PC-9 (cell line): ENCODE measurements at regions of chr20 and their contacts with region 1.

Region 1: GRCh38 chr20:33666293-33667244 is at the start of gene ACTL10:
- DNase-seq: peak; percentile 94 to 98
- H3K4me3 ChIP-seq: peak within 1 kb of the TSS; percentile 62
- H3K27ac ChIP-seq: peak within 1 kb of the TSS; percentile 63
- H3K4me1 ChIP-seq: peaks cover 37% of the 10 kb centered on the region; the same call in 1 of the 2 replicates
- H3K27me3 ChIP-seq: no peaks in the 10 kb centered on the region
- CTCF ChIP-seq: no peak; the same call in 1 of the 2 replicates
- total RNA-seq, gene ACTL10: 0.85 and 1.0 TPM in 2 replicates

Region 2: DNA sequence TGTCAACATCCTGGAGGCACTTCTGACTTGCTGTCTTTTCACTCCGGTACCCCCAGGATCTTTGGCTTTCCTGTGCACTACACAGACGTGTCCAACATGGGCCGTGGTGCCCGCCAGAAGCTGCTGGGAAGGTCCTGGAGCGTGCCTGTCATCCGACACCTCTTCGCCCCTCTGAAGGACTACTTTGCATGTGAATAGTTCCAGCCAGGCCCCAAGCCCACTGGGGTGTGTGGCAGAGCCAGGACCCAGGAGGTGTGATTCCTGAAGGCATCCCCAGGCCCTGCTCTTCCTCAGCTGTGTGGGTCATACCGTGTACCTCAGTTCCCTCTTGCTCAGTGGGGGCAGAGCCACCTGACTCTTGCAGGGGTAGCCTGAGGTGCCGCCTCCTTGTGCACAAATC is 858.9 kb before region 1 on chr20:
- CTCF ChIA-PET with region 1: no interaction called
- POLR2A ChIA-PET with region 1: no interaction called
- intact Hi-C with region 1: no loop called
- DNase-seq: no peak
- H3K4me3 ChIP-seq: no peak overlapping the region
- H3K27ac ChIP-seq: no peak overlapping the region
- H3K4me1 ChIP-seq: no peaks in the 10 kb centered on the region
- H3K27me3 ChIP-seq: no peaks in the 10 kb centered on the region
- CTCF ChIP-seq: no peak

Region 3: GRCh38 chr20:32819992-32820710 is 846.4 kb before region 1 on chr20:
- CTCF ChIA-PET with region 1: no interaction called
- POLR2A ChIA-PET with region 1: interaction called, 26 read pairs
- intact Hi-C with region 1: no loop called
- DNase-seq: no peak
- H3K4me3 ChIP-seq: peak overlapping the region; percentile 76
- H3K27ac ChIP-seq: peak overlapping the region; percentile 50; the same call in 1 of the 2 replicates
- H3K4me1 ChIP-seq: peaks cover 34% of the 10 kb centered on the region
- H3K27me3 ChIP-seq: no peaks in the 10 kb centered on the region
- CTCF ChIP-seq: no peak

Region 4: DNA sequence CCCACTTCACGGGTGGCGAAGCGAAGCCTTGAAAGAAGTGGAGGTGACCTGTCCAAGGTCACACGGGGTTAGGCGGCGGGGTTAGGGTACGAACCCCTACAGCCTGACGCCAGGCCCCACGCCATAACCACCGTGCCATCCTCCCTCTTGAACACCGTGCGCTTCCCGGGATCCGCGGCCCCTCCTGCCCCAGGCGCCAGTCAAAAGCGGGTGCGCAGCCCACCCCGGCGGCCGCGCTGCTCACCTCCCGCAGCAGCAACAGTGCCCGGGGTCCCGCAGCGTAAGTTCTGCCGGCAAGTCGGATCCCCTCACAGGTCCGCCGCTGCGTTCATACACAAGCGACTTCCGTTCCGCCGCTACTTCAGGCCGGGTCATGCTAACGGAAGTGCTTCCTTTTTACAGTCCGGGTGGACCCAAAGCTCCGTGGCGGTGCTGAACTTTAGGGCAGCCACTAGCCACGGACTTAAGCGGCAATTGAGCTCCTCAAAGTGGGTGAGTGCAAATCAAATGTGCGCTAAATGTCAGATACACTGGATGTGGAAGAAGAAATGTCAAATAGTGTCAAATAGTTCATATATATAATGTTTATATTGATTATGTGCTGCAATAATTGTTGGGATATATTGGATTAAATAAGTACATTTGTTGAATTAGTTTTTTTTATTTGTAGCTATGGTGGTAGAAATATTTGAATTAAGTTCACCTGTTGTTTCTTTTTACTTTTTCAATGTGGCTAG is 265.2 kb before region 1 on chr20 and contains the start of gene CDK5RAP1:
- CTCF ChIA-PET with region 1: no interaction called
- POLR2A ChIA-PET with region 1: interaction called, 4 read pairs
- intact Hi-C with region 1: loop called (anchors 1 kb)
- DNase-seq: peak; percentile 82
- H3K4me3 ChIP-seq: peak within 1 kb of the TSS; percentile 98
- H3K27ac ChIP-seq: no peak within 1 kb of the TSS
- H3K4me1 ChIP-seq: peaks cover 13% of the 10 kb centered on the region
- H3K27me3 ChIP-seq: no peaks in the 10 kb centered on the region
- CTCF ChIP-seq: no peak
- total RNA-seq, gene CDK5RAP1: 39.7 and 45.3 TPM in 2 replicates

Region 5: GRCh38 chr20:33653218-33653899 is 13.2 kb before region 1 on chr20:
- CTCF ChIA-PET with region 1: no interaction called
- POLR2A ChIA-PET with region 1: interaction called, 10 read pairs
- intact Hi-C with region 1: no loop called
- DNase-seq: peak in 1 of 2 experiments; percentile 60
- H3K4me3 ChIP-seq: no peak overlapping the region
- H3K27ac ChIP-seq: no peak overlapping the region
- H3K4me1 ChIP-seq: peaks cover 48% of the 10 kb centered on the region
- H3K27me3 ChIP-seq: no peaks in the 10 kb centered on the region
- CTCF ChIP-seq: peak; percentile 77

Region 6: GRCh38 chr20:33710681-33711445 is 44.3 kb after region 1 on chr20:
- CTCF ChIA-PET with region 1: no interaction called
- POLR2A ChIA-PET with region 1: no interaction called
- intact Hi-C with region 1: no loop called
- DNase-seq: no peak
- H3K4me3 ChIP-seq: no peak overlapping the region
- H3K27ac ChIP-seq: no peak overlapping the region
- H3K4me1 ChIP-seq: peaks cover 5% of the 10 kb centered on the region; the same call in 1 of the 2 replicates
- H3K27me3 ChIP-seq: no peaks in the 10 kb centered on the region
- CTCF ChIP-seq: no peak

Region 7: DNA sequence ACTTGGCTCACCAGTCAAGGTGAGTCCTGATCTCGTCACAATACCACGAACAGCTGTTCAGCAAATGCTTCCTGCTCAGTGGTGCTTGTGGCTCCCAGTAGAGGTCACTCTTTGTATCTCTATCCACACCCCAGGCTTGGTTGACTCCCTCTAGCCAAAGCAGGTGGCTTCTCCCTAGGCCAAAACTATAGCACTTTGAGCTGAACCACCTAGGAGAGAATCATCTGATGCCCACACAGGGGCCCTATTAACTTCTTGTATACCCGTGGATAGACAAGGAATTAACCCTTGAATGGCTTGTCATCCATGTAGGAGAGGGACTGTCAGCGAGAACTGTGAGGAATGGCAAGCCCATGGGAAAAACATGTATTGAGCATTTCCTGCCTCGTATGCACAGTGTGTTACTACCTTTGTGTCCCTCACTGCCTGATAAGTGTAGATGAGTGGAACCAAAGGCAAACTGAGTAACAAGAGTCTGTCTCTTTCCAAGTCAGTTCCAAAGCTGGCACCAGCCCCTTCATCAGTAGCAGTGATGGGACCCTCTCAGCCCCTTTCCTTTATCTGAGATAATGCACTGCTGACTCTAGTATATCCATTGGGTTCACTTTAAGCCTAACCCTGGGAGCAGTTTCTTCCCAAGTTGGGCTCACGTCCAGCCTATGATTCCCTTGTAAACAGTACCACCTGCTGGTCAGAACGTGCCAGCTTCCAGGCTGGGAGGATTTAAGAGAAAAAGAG is 402.9 kb after region 1 on chr20:
- CTCF ChIA-PET with region 1: no interaction called
- POLR2A ChIA-PET with region 1: interaction called, 12 read pairs
- intact Hi-C with region 1: loop called (anchors 5 kb)
- DNase-seq: peak; percentile 70 to 75
- H3K4me3 ChIP-seq: no peak overlapping the region
- H3K27ac ChIP-seq: 0 out of 2 replicates have a peak overlapping the region, but pooled peaks have one; percentile 33
- H3K4me1 ChIP-seq: peaks cover 13% of the 10 kb centered on the region; the same call in 1 of the 2 replicates
- H3K27me3 ChIP-seq: no peaks in the 10 kb centered on the region
- CTCF ChIP-seq: peak; percentile 89